Transverse colon (tissue), 4 donors: ENCODE measurements at regions of chr12 and their contacts with region 1.

Region 1: GRCh38 chr12:123232807-123233543 is at the starts of genes MPHOSPH9 and MTRFR:
- DNase-seq: peak; percentile 99
- H3K4me3 ChIP-seq: peak within 1 kb of the TSS; percentile 47 to 98 (median 76)
- H3K27ac ChIP-seq: peak within 1 kb of the TSS; percentile 93 to 96 (median 94)
- H3K4me1 ChIP-seq: peaks cover 21 to 58% (median 30%) of the 10 kb centered on the region in 4 donors
- H3K27me3 ChIP-seq: no peaks in the 10 kb centered on the region
- CTCF ChIP-seq: peak in 1 of 5 experiments; percentile 15
- EP300 ChIP-seq: no peak
- POLR2A ChIP-seq: peak; percentile 97
- total RNA-seq, gene MPHOSPH9: 15.6 to 90.9 (median 40.7) TPM
- total RNA-seq, gene MTRFR: 3.6 to 19.2 (median 9.7) TPM

Region 2: GRCh38 chr12:122860346-122861090 is 372.5 kb before region 1 on chr12:
- in situ Hi-C with region 1: loop called in 2 of 4 experiments (anchors 25 kb)
- intact Hi-C with region 1: no loop called
- DNase-seq: peak; percentile 91
- H3K4me3 ChIP-seq: no peak overlapping the region
- H3K27ac ChIP-seq: peak overlapping the region; percentile 11 to 47 (median 30)
- H3K4me1 ChIP-seq: peaks cover 12 to 34% (median 22%) of the 10 kb centered on the region in 4 donors
- H3K27me3 ChIP-seq: no peaks in the 10 kb centered on the region
- CTCF ChIP-seq: peak; percentile 94 to 96 (median 96)
- EP300 ChIP-seq: no peak
- POLR2A ChIP-seq: no peak

Region 3: DNA sequence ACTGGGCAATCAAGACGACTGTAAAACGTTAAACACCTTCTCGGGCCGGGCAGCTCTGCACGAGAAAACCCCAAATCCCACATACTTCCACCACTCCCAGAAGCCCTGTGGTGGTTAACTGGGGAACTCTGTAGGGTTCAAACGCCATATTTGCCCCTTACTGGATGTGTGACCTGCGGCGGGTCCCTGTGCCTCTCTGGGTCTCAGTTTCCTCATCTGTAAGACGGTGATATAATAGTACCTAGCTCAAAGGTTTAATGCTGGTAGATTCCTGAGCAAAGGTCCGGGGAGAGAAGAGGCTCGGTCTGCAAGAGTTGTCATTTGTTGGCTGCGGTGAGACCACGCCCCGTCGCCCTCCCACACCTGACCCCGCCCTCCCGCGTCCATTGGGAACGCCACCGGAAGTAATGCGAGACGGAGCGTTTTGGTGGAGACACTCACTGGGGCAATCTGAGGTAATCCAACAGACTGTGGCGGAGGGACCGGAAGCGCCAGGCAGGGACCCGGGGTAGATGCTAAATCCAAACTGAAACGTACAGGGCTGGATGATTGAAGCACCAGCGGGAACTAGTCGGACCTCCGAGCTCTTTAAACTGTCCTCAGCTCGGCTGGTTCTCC is 258.6 kb before region 1 on chr12:
- in situ Hi-C with region 1: loop called in 2 of 4 experiments (anchors 10 kb)
- intact Hi-C with region 1: loop called (anchors 10 kb)
- DNase-seq: peak; percentile 99
- H3K4me3 ChIP-seq: peak overlapping the region; percentile 63 to 94 (median 86)
- H3K27ac ChIP-seq: peak overlapping the region; percentile 97 to 99 (median 98)
- H3K4me1 ChIP-seq: peaks cover 16 to 46% (median 29%) of the 10 kb centered on the region in 4 donors
- H3K27me3 ChIP-seq: no peaks in the 10 kb centered on the region
- CTCF ChIP-seq: no peak
- EP300 ChIP-seq: no peak
- POLR2A ChIP-seq: peak; percentile 58

Region 4: GRCh38 chr12:123043536-123044001 is 189.4 kb before region 1 on chr12:
- in situ Hi-C with region 1: loop called in 2 of 4 experiments (anchors 25 kb)
- intact Hi-C with region 1: loop called (anchors 5 kb)
- DNase-seq: peak; percentile 86
- H3K4me3 ChIP-seq: no peak overlapping the region
- H3K27ac ChIP-seq: peak overlapping the region; percentile 68 to 78 (median 73)
- H3K4me1 ChIP-seq: peaks cover 11 to 32% (median 19%) of the 10 kb centered on the region in 4 donors
- H3K27me3 ChIP-seq: no peaks in the 10 kb centered on the region
- CTCF ChIP-seq: peak; percentile 54 to 77 (median 67)
- EP300 ChIP-seq: no peak
- POLR2A ChIP-seq: no peak

Region 5: DNA sequence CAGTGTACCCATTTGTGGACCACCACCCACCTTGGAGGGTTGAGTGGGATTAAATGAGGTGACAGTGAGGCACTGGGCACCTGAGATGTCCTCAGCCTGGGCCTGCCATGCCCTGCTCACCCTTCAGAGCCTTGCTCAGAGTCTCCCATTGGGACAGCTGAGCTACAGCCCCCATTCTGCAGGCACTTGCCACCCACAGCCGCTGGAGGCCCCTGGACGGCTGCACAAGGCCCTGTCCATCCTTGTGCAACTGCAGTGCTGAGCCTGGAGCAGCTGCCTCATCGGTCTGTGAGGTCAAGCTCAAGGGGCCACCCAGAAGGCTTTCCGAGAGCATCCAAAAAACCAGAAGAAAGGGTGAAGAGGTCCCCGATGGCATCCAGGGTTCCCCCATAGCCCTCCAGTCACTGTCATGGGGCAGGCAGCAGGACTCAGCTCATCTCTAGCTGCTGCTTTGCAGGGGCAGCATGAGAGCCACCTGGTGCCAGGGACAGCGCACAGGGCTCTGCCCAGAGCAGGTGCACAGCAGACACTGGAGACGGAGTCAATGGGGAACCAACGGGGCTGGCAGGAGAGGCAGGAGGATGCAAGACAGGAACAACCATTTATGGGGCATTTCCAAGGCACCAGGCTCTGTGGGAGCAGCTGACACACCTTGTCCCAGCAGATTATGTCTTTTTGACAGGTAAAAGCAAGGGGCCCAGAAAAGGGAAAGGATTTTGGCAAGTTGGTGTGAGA is 167.9 kb before region 1 on chr12:
- in situ Hi-C with region 1: no loop called
- intact Hi-C with region 1: no loop called
- DNase-seq: no peak
- H3K4me3 ChIP-seq: no peak overlapping the region
- H3K27ac ChIP-seq: peak overlapping the region; percentile 75 to 78 (median 76)
- H3K4me1 ChIP-seq: peaks cover 35 to 58% (median 41%) of the 10 kb centered on the region in 4 donors
- H3K27me3 ChIP-seq: no peaks in the 10 kb centered on the region
- CTCF ChIP-seq: no peak
- EP300 ChIP-seq: no peak
- POLR2A ChIP-seq: no peak

Region 6: GRCh38 chr12:123163227-123163626 is 69.7 kb before region 1 on chr12:
- in situ Hi-C with region 1: no loop called
- intact Hi-C with region 1: no loop called
- DNase-seq: no peak
- H3K4me3 ChIP-seq: no peak overlapping the region
- H3K27ac ChIP-seq: no peak overlapping the region
- H3K4me1 ChIP-seq: no peaks in the 10 kb centered on the region
- H3K27me3 ChIP-seq: no peaks in the 10 kb centered on the region
- CTCF ChIP-seq: no peak
- EP300 ChIP-seq: no peak
- POLR2A ChIP-seq: no peak